ENCODE measurements at regions of chr5 and their contacts with region 1.

Region 1: DNA sequence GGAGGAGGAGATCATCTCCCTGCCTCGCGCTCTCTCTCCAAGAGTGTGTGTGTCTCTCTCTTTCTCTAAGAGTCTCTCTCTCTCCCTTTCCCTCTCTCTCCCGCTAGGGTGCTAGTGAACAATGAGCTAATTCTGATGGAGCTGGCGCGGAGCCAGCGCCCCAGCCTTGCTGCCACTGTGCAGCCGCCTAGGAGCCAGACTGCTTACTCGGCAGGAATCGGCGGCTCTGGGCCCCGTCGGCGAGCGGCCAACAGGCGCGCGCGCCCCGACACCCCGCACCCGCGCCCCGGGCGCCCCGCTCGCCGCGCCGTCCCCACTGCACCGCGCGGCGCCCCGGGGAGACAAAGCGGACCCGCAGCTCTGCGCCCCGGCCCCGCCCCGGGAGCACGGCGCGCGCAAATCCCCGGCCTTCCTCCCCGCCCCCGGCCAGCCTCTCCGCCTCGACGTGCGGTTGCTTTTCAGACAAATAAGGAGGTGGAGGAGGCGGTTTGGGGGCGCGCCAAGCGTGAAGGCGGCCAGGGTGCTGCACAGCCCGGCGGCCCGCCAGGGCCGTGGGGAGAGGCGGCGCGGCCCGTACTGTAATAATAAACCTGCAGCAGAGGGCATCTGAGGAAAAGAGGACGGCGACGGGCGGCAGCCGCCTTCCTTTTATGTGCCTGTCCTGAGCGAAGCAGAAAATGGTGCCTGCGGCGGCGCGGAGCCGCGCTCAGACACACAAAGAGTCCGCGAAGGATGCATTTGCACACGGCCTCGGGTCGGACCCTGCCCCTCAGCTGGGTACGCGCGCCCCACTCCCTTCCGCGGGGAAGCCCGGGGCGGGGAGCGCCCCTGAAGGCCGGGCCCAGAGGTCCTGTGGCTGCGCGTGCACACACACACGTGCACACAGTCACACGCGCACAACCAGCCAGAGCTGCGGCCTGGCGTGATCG is 625 bp upstream of the NREP start:
- DNase-seq: peak; percentile 95
- H3K4me3 Mint-ChIP-seq: peak overlapping the region; percentile 79
- H3K27ac Mint-ChIP-seq: no peak overlapping the region
- H3K4me1 Mint-ChIP-seq: peaks cover 10% of the 10 kb centered on the region
- H3K27me3 Mint-ChIP-seq: no peaks in the 10 kb centered on the region
- CTCF ChIP-seq: peak; percentile 33

Region 2: DNA sequence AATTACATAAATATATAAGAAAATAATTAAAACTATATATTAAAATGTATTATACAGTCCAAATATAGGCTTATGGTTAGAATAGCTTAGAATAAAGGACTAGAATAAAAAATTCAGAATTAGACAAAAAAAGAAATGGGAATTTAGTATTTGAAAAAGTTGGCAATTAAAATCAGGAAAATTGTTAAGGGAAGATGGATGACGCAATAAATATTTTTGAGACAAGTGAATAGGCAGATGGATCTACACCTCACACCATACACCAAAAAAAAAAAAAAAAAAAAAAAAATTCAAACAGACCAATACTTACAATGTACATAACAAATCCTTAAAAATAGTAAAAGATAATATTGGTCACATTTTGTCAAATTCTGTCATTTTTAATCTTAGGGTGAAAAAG is 1231.9 kb before region 1 on chr5:
- CTCF ChIA-PET with region 1: no interaction called
- POLR2A ChIA-PET with region 1: no interaction called
- intact Hi-C with region 1: no loop called
- DNase-seq: no peak
- H3K4me3 Mint-ChIP-seq: no peak overlapping the region
- H3K27ac Mint-ChIP-seq: no peak overlapping the region
- H3K4me1 Mint-ChIP-seq: no peaks in the 10 kb centered on the region
- H3K27me3 Mint-ChIP-seq: no peaks in the 10 kb centered on the region
- CTCF ChIP-seq: no peak

Region 3: GRCh38 chr5:111680737-111681413 is 76.7 kb before region 1 on chr5:
- CTCF ChIA-PET with region 1: interaction called, 3 read pairs
- POLR2A ChIA-PET with region 1: interaction called, 3 read pairs
- intact Hi-C with region 1: loop called (anchors 2 kb)
- DNase-seq: peak; percentile 98
- H3K4me3 Mint-ChIP-seq: peak overlapping the region; percentile 35
- H3K27ac Mint-ChIP-seq: peak overlapping the region; percentile 83
- H3K4me1 Mint-ChIP-seq: peaks cover 29% of the 10 kb centered on the region
- H3K27me3 Mint-ChIP-seq: no peaks in the 10 kb centered on the region
- CTCF ChIP-seq: no peak

Region 4: GRCh38 chr5:111697881-111698757 is 59.5 kb before region 1 on chr5:
- CTCF ChIA-PET with region 1: interaction called, 7 read pairs
- POLR2A ChIA-PET with region 1: interaction called, 8 read pairs
- intact Hi-C with region 1: loop called (anchors 5 kb)
- DNase-seq: peak; percentile 58
- H3K4me3 Mint-ChIP-seq: no peak overlapping the region
- H3K27ac Mint-ChIP-seq: peak overlapping the region; percentile 27
- H3K4me1 Mint-ChIP-seq: peaks cover 51% of the 10 kb centered on the region
- H3K27me3 Mint-ChIP-seq: no peaks in the 10 kb centered on the region
- CTCF ChIP-seq: no peak

Region 5: GRCh38 chr5:111776913-111777781 is 19.5 kb after region 1 on chr5:
- CTCF ChIA-PET with region 1: interaction called, 8 read pairs
- POLR2A ChIA-PET with region 1: interaction called, 11 read pairs
- intact Hi-C with region 1: no loop called
- DNase-seq: no peak
- H3K4me3 Mint-ChIP-seq: no peak overlapping the region
- H3K27ac Mint-ChIP-seq: no peak overlapping the region
- H3K4me1 Mint-ChIP-seq: peaks cover 17% of the 10 kb centered on the region
- H3K27me3 Mint-ChIP-seq: no peaks in the 10 kb centered on the region
- CTCF ChIP-seq: no peak

Region 6: GRCh38 chr5:111997711-111998110 is 240.1 kb after region 1 on chr5:
- CTCF ChIA-PET with region 1: no interaction called
- POLR2A ChIA-PET with region 1: no interaction called
- intact Hi-C with region 1: loop called (anchors 10 kb)
- DNase-seq: peak; percentile 92
- H3K4me3 Mint-ChIP-seq: no peak overlapping the region
- H3K27ac Mint-ChIP-seq: peak overlapping the region; percentile 54
- H3K4me1 Mint-ChIP-seq: peaks cover 28% of the 10 kb centered on the region
- H3K27me3 Mint-ChIP-seq: no peaks in the 10 kb centered on the region
- CTCF ChIP-seq: no peak

Measured in MCF 10A (cell line).